Dorsolateral prefrontal cortex (tissue), 120 donors: ENCODE measurements at regions of chr19 and their contacts with region 1.

Region 1: DNA sequence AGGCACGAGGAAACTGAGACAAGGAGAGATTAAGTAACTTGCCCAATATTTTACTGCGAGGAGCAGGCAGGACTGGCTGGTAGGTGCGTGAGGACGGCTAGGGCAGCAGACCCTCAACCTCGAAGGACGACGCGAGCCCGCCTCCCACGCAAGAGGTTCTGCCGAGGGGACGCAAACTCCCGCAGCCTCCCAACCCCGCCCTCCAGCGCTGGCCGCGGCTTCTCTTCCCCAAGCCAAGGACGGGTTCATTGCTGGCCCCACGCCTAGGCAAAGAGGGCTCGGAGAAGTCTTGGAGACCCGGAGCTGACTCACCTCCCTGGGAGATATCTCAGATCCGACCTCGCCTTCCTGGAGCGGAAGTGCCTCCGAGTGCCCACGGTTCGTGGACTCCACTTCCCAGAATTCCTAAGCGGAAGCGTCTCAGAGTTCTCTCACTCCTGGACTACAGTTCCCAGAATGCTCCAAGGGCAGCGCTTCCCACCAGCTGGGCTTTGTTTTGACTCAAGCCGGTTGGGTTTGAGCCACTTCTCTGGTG is at the start of gene ZNF235:
- DNase-seq: peak; percentile 77 to 95 (median 92)
- H3K4me3 ChIP-seq: peak within 1 kb of the TSS; percentile 63 to 99 (median 89)
- H3K27ac ChIP-seq: peak within 1 kb of the TSS in 48 of 59 donors; percentile 2 to 89 (median 60)
- H3K27me3 ChIP-seq: no peaks in the 10 kb centered on the region
- CTCF ChIP-seq: peak in 17 of 56 donors; percentile 10 to 43 (median 25)
- total RNA-seq, gene ZNF235: 8.6 to 20.5 (median 14.1) TPM

Region 2: DNA sequence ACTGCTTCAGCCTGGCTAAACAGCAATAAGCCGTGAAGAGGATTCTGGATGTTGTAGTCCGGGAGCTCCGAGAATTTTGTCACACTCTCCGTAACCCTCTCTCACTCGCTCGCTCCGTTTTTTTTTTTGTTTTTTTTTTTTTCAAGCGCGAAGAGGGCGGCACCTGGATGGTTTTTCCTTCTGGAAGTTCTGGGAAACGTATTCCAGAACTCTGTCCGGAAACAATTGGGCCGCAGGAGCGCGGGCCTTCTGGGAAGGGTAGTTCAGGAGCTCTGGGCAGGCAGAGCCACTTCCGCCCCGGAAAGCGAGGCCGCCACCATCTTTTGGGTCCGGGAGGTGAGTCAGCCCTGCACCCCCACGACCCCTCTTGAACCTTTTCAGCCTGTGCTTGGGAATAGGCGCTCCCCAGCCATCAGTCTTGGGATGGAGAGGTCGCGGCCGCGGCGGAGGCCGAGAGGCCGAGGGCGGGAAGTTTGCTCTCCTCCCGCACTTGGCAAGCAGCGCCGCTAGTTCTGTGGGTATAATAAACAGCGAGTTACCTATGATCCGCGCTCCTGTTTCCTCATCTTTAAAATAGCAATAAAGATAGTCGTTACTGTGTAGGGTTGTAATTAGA is 92.4 kb before region 1 on chr19 and contains the start of gene ZNF227:
- intact Hi-C with region 1: loop called in 1 of 2 experiments (anchors 2 kb)
- DNase-seq: peak; percentile 78 to 94 (median 92)
- H3K4me3 ChIP-seq: peak within 1 kb of the TSS; percentile 68 to 100 (median 90)
- H3K27ac ChIP-seq: peak within 1 kb of the TSS; percentile 11 to 96 (median 87)
- H3K27me3 ChIP-seq: no peaks in the 10 kb centered on the region
- CTCF ChIP-seq: peak in 15 of 56 donors; percentile 6 to 41 (median 21)
- total RNA-seq, gene ZNF227: 23.1 to 58.1 (median 37.4) TPM

Region 3: GRCh38 chr19:44315883-44316282 is 11.2 kb after region 1 on chr19:
- intact Hi-C with region 1: no loop called
- DNase-seq: no peak
- H3K4me3 ChIP-seq: no peak overlapping the region
- H3K27ac ChIP-seq: no peak overlapping the region
- H3K27me3 ChIP-seq: no peaks in the 10 kb centered on the region
- CTCF ChIP-seq: no peak

Region 4: GRCh38 chr19:44447916-44448674 is 143.4 kb after region 1 on chr19 and contains the start of gene ZNF229:
- intact Hi-C with region 1: no loop called
- DNase-seq: peak; percentile 26 to 89 (median 80)
- H3K4me3 ChIP-seq: peak within 1 kb of the TSS; percentile 19 to 78 (median 60)
- H3K27ac ChIP-seq: peak within 1 kb of the TSS in 1 of 59 donors; percentile 43
- H3K27me3 ChIP-seq: peaks cover 0 to 19% (median 0%) of the 10 kb centered on the region in 45 donors
- CTCF ChIP-seq: no peak
- total RNA-seq, gene ZNF229: 2.4 to 14.4 (median 6.5) TPM

Region 5: GRCh38 chr19:44512326-44513298 is 207.9 kb after region 1 on chr19:
- intact Hi-C with region 1: no loop called
- DNase-seq: no peak
- H3K4me3 ChIP-seq: no peak overlapping the region
- H3K27ac ChIP-seq: no peak overlapping the region
- H3K27me3 ChIP-seq: peaks cover 0 to 15% (median 0%) of the 10 kb centered on the region in 45 donors
- CTCF ChIP-seq: peak in 3 of 56 donors; percentile 27 to 30 (median 28)